ENCODE measurements at regions of chr4 and their contacts with region 1.

Region 1: DNA sequence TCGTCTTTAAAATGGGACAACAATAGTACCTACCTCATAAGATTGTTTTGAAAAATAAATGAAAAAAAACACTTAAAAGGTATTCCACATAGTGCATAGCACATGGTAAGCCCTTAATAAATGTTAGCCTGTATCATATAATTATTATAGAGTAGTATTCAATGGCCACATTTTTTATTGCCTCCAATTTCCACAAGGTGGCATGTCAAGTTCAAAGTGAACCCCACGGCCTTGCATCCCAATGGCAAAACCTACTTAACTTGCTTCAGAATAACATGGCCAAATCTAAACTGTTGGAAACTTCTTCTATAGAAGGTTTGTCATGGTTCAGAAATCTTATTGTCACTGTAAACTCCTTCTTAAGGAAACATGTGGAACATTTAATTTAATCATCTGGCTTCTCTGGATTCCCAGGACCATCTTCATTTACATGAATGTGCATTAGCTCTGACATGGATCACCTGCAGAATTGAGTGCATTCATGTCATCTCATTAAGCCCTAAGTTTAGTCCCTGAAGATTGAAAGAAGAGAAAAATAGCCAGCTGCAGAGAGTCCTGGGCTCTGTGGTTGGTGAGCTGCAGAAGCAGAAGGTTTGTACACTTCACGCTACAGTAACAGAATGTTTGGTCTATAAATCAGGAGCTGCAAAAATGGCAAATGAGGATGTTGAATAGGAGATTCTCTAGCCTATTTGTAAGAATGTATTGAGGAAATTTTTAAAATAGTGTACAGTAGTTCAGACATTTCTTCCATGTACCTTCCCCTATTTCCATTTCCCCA is 61.0 kb downstream of the ANXA3 start:
- DNase-seq: peak; percentile 61
- H3K4me3 ChIP-seq: no peak overlapping the region
- H3K27ac ChIP-seq: no peak overlapping the region
- H3K4me1 ChIP-seq: no peaks in the 10 kb centered on the region
- H3K27me3 ChIP-seq: no peaks in the 10 kb centered on the region
- CTCF ChIP-seq: peak; percentile 52 to 72 (median 60)
- POLR2A ChIP-seq: no peak

Region 2: GRCh38 chr4:78534286-78534955 is 78.2 kb before region 1 on chr4:
- intact Hi-C with region 1: no loop called
- DNase-seq: no peak
- H3K4me3 ChIP-seq: no peak overlapping the region
- H3K27ac ChIP-seq: no peak overlapping the region
- H3K4me1 ChIP-seq: no peaks in the 10 kb centered on the region
- H3K27me3 ChIP-seq: no peaks in the 10 kb centered on the region
- CTCF ChIP-seq: no peak
- POLR2A ChIP-seq: no peak

Region 3: GRCh38 chr4:78661921-78662521 is 49.4 kb after region 1 on chr4:
- intact Hi-C with region 1: no loop called
- DNase-seq: no peak
- H3K4me3 ChIP-seq: no peak overlapping the region
- H3K27ac ChIP-seq: no peak overlapping the region
- H3K4me1 ChIP-seq: no peaks in the 10 kb centered on the region
- H3K27me3 ChIP-seq: no peaks in the 10 kb centered on the region
- CTCF ChIP-seq: no peak
- POLR2A ChIP-seq: no peak

Region 4: GRCh38 chr4:78864405-78865024 is 251.9 kb after region 1 on chr4:
- intact Hi-C with region 1: loop called (anchors 10 kb)
- DNase-seq: no peak
- H3K4me3 ChIP-seq: no peak overlapping the region
- H3K27ac ChIP-seq: no peak overlapping the region
- H3K4me1 ChIP-seq: no peaks in the 10 kb centered on the region
- H3K27me3 ChIP-seq: no peaks in the 10 kb centered on the region
- CTCF ChIP-seq: peak; percentile 70 to 84 (median 74)
- POLR2A ChIP-seq: no peak